ENCODE measurements at regions of chr19 and their contacts with region 1.

Region 1: GRCh38 chr19:10259162-10259905 is 7.3 kb downstream of the MRPL4 start:
- DNase-seq: peak; percentile 92
- H3K4me3 Mint-ChIP-seq: no peak overlapping the region
- H3K27ac Mint-ChIP-seq: no peak overlapping the region
- H3K4me1 Mint-ChIP-seq: no peaks in the 10 kb centered on the region
- H3K27me3 Mint-ChIP-seq: no peaks in the 10 kb centered on the region
- CTCF ChIP-seq: peak; percentile 70

Region 2: DNA sequence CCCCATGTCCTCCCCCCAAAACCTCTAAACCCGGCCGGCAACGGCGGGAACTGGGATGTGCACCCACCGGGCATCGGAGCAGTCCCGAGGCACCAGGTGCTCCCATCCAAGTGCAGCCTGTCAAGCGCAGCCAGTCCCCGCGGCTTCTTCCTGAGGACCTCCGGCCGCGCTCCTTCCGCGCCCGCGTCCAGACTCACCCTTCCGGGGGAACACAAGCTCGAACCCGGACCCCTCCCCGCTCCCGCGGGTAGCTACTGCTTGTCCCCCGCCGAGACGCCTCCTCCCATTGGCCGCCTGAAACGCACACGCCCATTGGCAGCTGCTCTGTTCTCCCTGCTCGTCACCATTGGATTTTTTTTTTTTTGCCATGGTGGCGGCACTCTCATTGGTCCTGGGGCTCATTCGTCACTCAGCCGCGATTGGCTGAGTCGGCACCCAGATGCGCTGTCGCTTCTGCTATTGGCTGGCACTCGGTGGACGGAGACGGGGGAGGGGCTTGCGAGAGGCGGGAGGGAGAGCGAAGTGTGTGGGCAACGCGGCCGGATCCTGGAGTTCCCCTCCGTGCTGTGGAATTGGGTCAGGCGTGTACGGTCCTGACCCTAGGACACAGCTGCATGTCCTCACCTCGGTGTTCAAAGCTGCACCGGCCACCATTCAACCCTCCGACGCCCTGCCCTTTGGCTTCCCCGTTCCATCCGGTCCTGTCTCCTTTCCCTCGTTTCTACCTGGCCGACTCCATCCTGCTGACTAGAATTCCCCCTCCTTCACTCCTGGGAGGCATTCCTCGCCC is 121.2 kb after region 1 on chr19 and contains the start of gene TYK2:
- CTCF ChIA-PET with region 1: interaction called, 68 read pairs
- POLR2A ChIA-PET with region 1: interaction called, 19 read pairs
- intact Hi-C with region 1: no loop called
- DNase-seq: peak; percentile 100
- H3K4me3 Mint-ChIP-seq: peak within 1 kb of the TSS; percentile 89
- H3K27ac Mint-ChIP-seq: peak within 1 kb of the TSS; percentile 80
- H3K4me1 Mint-ChIP-seq: peaks cover 6% of the 10 kb centered on the region
- H3K27me3 Mint-ChIP-seq: no peaks in the 10 kb centered on the region
- CTCF ChIP-seq: no peak
- total RNA-seq, gene TYK2: 75.0 and 83.7 TPM in 2 replicates

Region 3: GRCh38 chr19:10388957-10389356 is 129.6 kb after region 1 on chr19:
- CTCF ChIA-PET with region 1: interaction called, 68 read pairs
- POLR2A ChIA-PET with region 1: interaction called, 19 read pairs
- intact Hi-C with region 1: loop called (anchors 1 kb)
- DNase-seq: peak; percentile 89
- H3K4me3 Mint-ChIP-seq: no peak overlapping the region
- H3K27ac Mint-ChIP-seq: no peak overlapping the region
- H3K4me1 Mint-ChIP-seq: peaks cover 5% of the 10 kb centered on the region
- H3K27me3 Mint-ChIP-seq: no peaks in the 10 kb centered on the region
- CTCF ChIP-seq: peak; percentile 89